ENCODE measurements at regions of chr19 and their contacts with region 1.

Region 1: DNA sequence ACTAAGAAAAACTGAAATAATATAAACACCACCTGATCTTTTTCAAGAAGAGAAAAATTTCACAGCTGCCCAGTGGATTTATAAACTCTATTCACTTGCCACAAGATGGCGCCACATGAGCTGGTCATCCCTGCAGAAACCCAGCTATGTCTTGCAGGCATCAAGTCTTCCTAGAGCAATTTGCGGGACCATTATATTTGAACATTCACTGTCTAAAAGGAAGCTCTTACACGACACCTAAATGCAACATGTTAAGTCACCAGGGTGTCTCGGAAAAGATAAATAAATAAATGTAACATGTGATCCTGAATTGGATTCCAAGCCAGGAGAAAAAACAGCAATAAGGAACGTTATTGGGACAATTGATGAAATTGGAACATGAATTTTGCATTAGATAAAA is 20.3 kb upstream of the AKT2 start:
- DNase-seq: peak; percentile 89
- ATAC-seq: peak; percentile 82
- H3K4me3 Mint-ChIP-seq: no peak overlapping the region
- H3K27ac Mint-ChIP-seq: no peak overlapping the region
- H3K4me1 Mint-ChIP-seq: peaks cover 3% of the 10 kb centered on the region
- H3K27me3 Mint-ChIP-seq: no peaks in the 10 kb centered on the region

Region 2: DNA sequence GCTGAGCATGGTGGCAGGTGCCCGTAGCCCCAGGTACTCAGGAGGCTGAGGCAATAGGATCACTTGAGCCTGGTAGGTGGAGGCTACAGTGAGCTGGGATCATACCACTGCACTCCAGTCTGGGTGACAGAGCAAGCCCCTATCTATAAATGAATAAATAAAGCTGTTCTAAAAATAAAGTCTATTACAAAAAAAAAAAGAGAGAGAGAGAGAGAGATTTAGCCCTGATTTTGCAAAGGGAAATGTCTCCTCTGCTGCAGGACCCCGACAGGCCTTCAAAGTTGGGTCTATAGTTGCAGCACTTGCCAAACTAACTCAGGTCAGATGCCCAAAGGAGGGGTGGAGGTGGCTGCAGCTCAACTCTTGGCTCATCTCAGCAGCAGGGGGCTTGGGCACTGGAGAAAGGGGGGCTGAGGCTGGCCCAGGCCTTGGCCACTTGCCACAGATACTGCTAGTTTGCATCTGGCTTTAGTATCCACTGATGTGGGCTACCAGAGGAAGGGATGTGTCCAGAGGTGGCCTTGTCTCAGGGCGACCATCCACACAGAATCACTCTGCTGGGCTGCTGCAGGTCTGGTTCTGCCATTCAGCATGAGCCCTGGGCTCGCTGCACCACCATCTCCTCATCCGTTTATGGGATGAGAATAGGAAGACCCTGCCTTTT is 10.5 kb after region 1 on chr19:
- CTCF ChIA-PET with region 1: interaction called, 15 read pairs
- POLR2A ChIA-PET with region 1: no interaction called
- DNase-seq: no peak
- ATAC-seq: no peak
- H3K4me3 Mint-ChIP-seq: no peak overlapping the region
- H3K27ac Mint-ChIP-seq: no peak overlapping the region
- H3K4me1 Mint-ChIP-seq: peaks cover 13% of the 10 kb centered on the region
- H3K27me3 Mint-ChIP-seq: no peaks in the 10 kb centered on the region

Region 3: GRCh38 chr19:40403262-40403984 is 98.0 kb after region 1 on chr19:
- CTCF ChIA-PET with region 1: interaction called, 11 read pairs
- POLR2A ChIA-PET with region 1: no interaction called
- DNase-seq: peak; percentile 89
- ATAC-seq: peak; percentile 78
- H3K4me3 Mint-ChIP-seq: peak overlapping the region; percentile 87
- H3K27ac Mint-ChIP-seq: peak overlapping the region; percentile 72
- H3K4me1 Mint-ChIP-seq: peaks cover 32% of the 10 kb centered on the region
- H3K27me3 Mint-ChIP-seq: peaks cover 12% of the 10 kb centered on the region

Region 4: GRCh38 chr19:40452016-40452415 is 146.6 kb after region 1 on chr19:
- CTCF ChIA-PET with region 1: no interaction called
- POLR2A ChIA-PET with region 1: no interaction called
- DNase-seq: no peak
- ATAC-seq: no peak
- H3K4me3 Mint-ChIP-seq: no peak overlapping the region
- H3K27ac Mint-ChIP-seq: no peak overlapping the region
- H3K4me1 Mint-ChIP-seq: no peaks in the 10 kb centered on the region
- H3K27me3 Mint-ChIP-seq: no peaks in the 10 kb centered on the region

Region 5: DNA sequence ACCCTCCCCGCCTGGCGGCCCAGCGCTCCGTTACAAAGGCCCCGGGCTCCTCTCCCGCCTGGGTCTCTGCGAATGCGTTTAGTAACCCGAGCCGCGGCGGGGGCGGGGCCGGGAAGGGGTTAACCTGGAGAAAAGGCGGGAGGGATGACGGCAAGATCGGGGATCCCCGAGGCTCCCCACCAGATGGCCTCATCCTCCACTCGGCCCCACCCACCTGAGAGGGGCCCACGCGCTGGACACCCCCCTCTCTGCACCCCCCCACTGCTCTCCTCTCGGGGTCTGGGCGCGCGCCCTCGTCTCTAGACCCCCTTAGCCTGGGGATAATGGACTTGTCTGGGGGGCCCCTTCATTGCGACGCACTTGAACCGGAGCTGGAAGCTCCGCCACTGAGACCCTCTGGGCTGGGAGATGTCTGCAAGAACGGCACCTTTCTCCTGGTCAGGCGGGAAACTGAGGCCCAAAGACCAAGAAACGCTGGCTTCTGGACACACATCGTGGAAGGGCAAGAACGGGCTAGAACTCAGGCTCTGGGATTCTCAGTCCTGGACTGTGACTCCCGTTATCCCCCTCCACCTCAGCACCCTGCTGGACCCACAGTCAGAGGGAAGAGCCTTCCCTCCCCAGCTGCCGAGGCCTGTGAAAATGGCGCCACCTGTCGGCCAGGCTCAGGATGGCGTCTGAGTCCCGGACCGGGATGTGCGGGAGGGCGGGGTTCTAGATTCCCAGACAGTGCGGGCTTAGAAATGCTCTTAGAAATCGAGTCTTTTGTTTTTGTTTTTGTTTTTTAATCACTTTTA is 292.9 kb after region 1 on chr19:
- CTCF ChIA-PET with region 1: interaction called, 16 read pairs
- POLR2A ChIA-PET with region 1: no interaction called
- DNase-seq: peak; percentile 86
- ATAC-seq: peak; percentile 61
- H3K4me3 Mint-ChIP-seq: peak overlapping the region; percentile 25
- H3K27ac Mint-ChIP-seq: no peak overlapping the region
- H3K4me1 Mint-ChIP-seq: peaks cover 60% of the 10 kb centered on the region
- H3K27me3 Mint-ChIP-seq: peaks cover 49% of the 10 kb centered on the region

Measured in activated CD8-positive, alpha-beta T cell treated with anti-CD3 and anti-CD28 coated beads, Interleukin-2, amount 10 ng/mL, durations not matched to agents 7 days and 5 days (primary cell).